ENCODE measurements at regions of chr20 and their contacts with region 1.

Region 1: GRCh38 chr20:20915835-20916234 is 190.3 kb downstream of the LINC00237 start:
- DNase-seq: no peak
- ATAC-seq: no peak
- H3K4me3 ChIP-seq: no peak overlapping the region
- H3K27ac ChIP-seq: no peak overlapping the region
- H3K4me1 ChIP-seq: no peaks in the 10 kb centered on the region
- H3K27me3 ChIP-seq: peaks cover 0 to 10% (median 0%) of the 10 kb centered on the region in 9 donors
- CTCF ChIP-seq: no peak
- POLR2A ChIP-seq: no peak

Region 2: DNA sequence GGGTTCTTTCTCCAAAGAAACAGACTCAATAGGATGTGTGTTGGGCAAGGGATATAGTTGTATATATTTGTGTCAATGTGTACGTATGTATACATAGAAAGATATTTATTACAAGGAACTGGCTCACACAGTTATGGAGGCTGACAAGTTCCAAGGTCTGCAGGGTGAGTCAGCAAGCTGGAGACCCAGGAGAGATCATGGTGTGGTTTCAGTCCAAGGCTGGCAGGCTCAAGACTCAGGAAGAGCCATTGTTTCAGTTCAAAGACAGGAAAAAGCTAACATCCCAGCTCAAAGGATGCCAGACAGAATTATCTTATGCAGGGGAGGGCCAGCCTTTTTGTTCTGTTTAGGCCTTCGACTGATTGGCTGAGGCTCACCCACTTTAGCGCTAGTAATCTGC is 113.5 kb before region 1 on chr20:
- intact Hi-C with region 1: no loop called
- DNase-seq: no peak
- ATAC-seq: peak in 1 of 4 donors; percentile 78
- H3K4me3 ChIP-seq: no peak overlapping the region
- H3K27ac ChIP-seq: no peak overlapping the region
- H3K4me1 ChIP-seq: peaks cover 0 to 6% (median 0%) of the 10 kb centered on the region in 12 donors
- H3K27me3 ChIP-seq: no peaks in the 10 kb centered on the region
- CTCF ChIP-seq: no peak
- POLR2A ChIP-seq: no peak

Region 3: DNA sequence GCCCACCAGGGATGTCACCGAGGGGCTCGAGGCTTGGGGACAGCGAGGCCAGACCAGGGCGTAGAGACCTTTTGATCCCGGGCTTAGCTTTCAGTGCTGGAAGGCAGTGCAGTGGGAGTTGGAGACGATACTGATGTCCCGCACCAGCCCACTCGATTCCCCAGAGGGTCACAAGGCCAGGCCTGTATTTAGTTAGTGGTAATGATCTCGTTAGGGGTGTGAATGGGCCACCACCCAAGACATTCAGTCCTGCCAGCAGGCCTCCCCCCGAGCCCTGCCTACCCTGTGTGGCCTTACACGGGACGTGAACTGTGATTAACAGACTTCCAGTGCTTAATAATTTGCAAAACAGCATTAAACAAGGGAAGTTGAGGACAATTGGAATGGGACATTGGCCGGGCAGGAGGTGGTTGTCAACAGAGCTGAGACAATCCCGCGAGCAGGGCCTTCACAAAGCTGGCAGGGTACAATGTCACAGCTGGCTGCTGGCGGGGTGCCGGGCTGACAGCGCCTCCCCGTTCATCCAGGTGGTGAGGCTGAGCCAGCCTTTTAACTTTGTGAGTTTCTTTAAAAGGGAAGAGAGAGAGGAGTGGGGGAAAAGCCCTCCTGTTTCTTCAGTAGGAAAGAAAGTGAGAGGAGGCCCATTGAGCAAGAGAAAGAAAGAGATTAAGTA is 28.1 kb before region 1 on chr20:
- intact Hi-C with region 1: no loop called
- DNase-seq: no peak
- ATAC-seq: no peak
- H3K4me3 ChIP-seq: no peak overlapping the region
- H3K27ac ChIP-seq: no peak overlapping the region
- H3K4me1 ChIP-seq: no peaks in the 10 kb centered on the region
- H3K27me3 ChIP-seq: peaks cover 0 to 46% (median 7%) of the 10 kb centered on the region in 9 donors
- CTCF ChIP-seq: no peak
- POLR2A ChIP-seq: no peak

Region 4: GRCh38 chr20:20969701-20970280 is 54.0 kb after region 1 on chr20:
- intact Hi-C with region 1: loop called in 1 of 10 experiments (anchors 10 kb)
- DNase-seq: no peak
- ATAC-seq: no peak
- H3K4me3 ChIP-seq: no peak overlapping the region
- H3K27ac ChIP-seq: no peak overlapping the region
- H3K4me1 ChIP-seq: no peaks in the 10 kb centered on the region
- H3K27me3 ChIP-seq: peaks cover 0 to 14% (median 0%) of the 10 kb centered on the region in 9 donors
- CTCF ChIP-seq: no peak
- POLR2A ChIP-seq: no peak

Region 5: GRCh38 chr20:21053002-21053762 is 137.3 kb after region 1 on chr20:
- intact Hi-C with region 1: no loop called
- DNase-seq: no peak
- ATAC-seq: no peak
- H3K4me3 ChIP-seq: no peak overlapping the region
- H3K27ac ChIP-seq: no peak overlapping the region
- H3K4me1 ChIP-seq: no peaks in the 10 kb centered on the region
- H3K27me3 ChIP-seq: peaks cover 0 to 17% (median 10%) of the 10 kb centered on the region in 9 donors
- CTCF ChIP-seq: no peak
- POLR2A ChIP-seq: no peak